ENCODE measurements at regions of chr17 and their contacts with region 1.

Region 1: GRCh38 chr17:81484195-81484979 is 28.2 kb downstream of the ACTG1 start:
- DNase-seq: peak; percentile 68
- H3K4me3 ChIP-seq: peak overlapping the region in 1 of 3 experiments; percentile 8
- H3K27ac ChIP-seq: no peak overlapping the region
- H3K4me1 ChIP-seq: peaks cover 18% of the 10 kb centered on the region
- H3K27me3 ChIP-seq: peaks cover 0 to 1% of the 10 kb centered on the region in 2 experiments
- CTCF ChIP-seq: peak; percentile 82 to 98
- POLR2A ChIP-seq: no peak

Region 2: DNA sequence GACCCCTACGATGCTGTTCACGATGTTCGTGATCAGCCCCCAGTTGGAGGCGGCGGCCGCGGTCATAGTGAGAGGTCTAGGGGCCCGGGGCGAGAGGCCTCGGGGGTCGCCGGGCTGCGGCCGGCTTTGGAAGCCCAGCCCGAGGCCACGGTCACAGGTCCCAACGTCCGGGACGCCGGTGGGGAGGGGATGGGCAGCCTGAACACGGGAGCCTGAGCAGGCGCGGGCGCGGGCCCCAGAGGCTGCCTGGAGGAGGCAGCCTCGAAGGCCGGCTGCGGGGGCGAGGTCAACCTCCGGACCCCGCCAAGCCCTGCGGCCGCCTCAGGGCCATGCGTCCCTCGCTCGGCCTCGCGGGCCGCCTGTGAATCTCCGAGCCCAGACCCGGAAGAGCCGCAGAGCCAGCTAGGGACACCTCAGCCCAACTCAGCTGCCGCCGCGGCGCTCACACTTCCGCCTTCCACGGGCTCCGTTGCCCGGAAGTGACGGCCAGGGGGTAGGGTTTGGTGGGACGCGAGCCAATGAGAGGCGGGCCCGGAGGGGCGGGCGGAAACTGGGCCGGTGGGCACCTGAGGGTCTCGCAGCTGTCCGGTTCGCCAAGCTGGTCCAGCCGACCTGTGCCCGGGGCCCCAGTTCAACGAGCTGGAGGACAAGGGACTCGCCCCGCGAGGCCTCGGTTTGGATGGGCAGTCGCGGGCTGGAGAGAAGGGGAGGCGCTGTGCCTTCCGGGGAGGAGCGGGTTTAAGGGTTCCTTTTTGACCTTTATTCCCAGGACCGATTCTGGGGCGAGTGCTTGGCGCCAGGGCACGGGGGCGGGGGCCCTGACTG is 189.3 kb before region 1 on chr17 and contains the start of gene SLC38A10:
- CTCF ChIA-PET with region 1: interaction called, 8 read pairs
- POLR2A ChIA-PET with region 1: no interaction called
- dilution Hi-C with region 1: no loop called
- intact Hi-C with region 1: loop called (anchors 1 kb)
- DNase-seq: peak; percentile 79
- H3K4me3 ChIP-seq: peak within 1 kb of the TSS; percentile 57 to 72 (median 63)
- H3K27ac ChIP-seq: peak within 1 kb of the TSS; percentile 86
- H3K4me1 ChIP-seq: peaks cover 14% of the 10 kb centered on the region
- H3K27me3 ChIP-seq: no peaks in the 10 kb centered on the region
- CTCF ChIP-seq: no peak
- POLR2A ChIP-seq: peak; percentile 91
- total RNA-seq, gene SLC38A10: 109 and 113 TPM in 2 replicates

Region 3: DNA sequence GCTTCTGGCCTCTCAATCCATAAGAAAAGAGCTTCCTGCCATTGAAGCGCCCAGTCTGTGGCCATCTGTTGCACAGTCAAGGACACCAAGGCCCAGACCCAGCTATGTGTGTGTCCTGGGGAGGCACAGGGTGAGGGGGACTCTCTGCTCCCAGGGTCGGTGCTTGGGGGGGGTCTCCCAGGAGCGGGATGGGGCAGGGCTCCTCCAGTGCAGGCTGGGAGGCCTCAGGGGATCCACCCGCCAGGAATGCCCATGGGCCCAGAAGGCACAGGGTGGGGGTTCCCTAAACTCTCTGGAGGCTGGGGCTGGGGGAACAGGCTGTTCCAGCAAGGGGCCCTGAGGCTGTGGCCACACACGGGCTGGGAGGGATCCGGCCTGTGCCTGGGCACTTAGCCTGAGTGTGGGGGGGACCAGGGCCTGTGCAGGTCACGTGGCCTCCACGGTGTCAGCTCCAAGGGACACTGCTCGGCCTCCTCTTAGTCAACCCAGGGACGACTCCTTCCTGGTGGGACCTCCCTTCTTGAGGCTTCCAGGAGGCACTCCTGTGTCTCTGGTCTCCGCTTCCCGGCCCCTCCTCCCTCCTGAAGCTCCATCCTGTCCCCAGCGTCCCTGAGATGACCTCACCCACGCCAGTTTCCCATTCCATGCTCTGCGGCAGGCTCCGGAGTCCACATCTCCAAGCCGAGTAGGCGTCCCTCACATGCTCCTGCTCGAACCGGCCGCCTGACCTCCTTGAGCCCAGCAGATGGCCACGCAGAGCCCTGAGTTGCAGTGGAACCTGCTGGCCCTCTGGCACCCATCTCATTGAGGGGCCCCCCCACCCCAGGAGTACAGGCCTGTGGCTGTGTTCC is 112.3 kb before region 1 on chr17:
- CTCF ChIA-PET with region 1: interaction called, 21 read pairs
- POLR2A ChIA-PET with region 1: no interaction called
- dilution Hi-C with region 1: no loop called
- intact Hi-C with region 1: no loop called
- DNase-seq: peak; percentile 31
- H3K4me3 ChIP-seq: no peak overlapping the region
- H3K27ac ChIP-seq: no peak overlapping the region
- H3K4me1 ChIP-seq: no peaks in the 10 kb centered on the region
- H3K27me3 ChIP-seq: peaks cover 0 to 5% of the 10 kb centered on the region in 2 experiments
- CTCF ChIP-seq: peak; percentile 31 to 71
- POLR2A ChIP-seq: no peak

Region 4: GRCh38 chr17:81401723-81402529 is 82.5 kb before region 1 on chr17:
- CTCF ChIA-PET with region 1: interaction called, 58 read pairs
- POLR2A ChIA-PET with region 1: interaction called, 3 read pairs
- dilution Hi-C with region 1: no loop called
- intact Hi-C with region 1: loop called (anchors 1 kb)
- DNase-seq: peak; percentile 41
- H3K4me3 ChIP-seq: no peak overlapping the region
- H3K27ac ChIP-seq: no peak overlapping the region
- H3K4me1 ChIP-seq: peaks cover 21% of the 10 kb centered on the region
- H3K27me3 ChIP-seq: no peaks in the 10 kb centered on the region
- CTCF ChIP-seq: peak; percentile 19 to 47
- POLR2A ChIP-seq: no peak

Region 5: GRCh38 chr17:81440876-81441244 is 43.5 kb before region 1 on chr17:
- CTCF ChIA-PET with region 1: interaction called, 26 read pairs
- POLR2A ChIA-PET with region 1: no interaction called
- dilution Hi-C with region 1: no loop called
- intact Hi-C with region 1: loop called (anchors 5 kb)
- DNase-seq: peak; percentile 19
- H3K4me3 ChIP-seq: no peak overlapping the region
- H3K27ac ChIP-seq: no peak overlapping the region
- H3K4me1 ChIP-seq: no peaks in the 10 kb centered on the region
- H3K27me3 ChIP-seq: no peaks in the 10 kb centered on the region
- CTCF ChIP-seq: peak; percentile 48 to 75
- POLR2A ChIP-seq: no peak

Region 6: GRCh38 chr17:81512560-81513371 is 28.4 kb after region 1 on chr17 and contains the start of gene ACTG1:
- CTCF ChIA-PET with region 1: interaction called, 11 read pairs
- POLR2A ChIA-PET with region 1: interaction called, 3 read pairs
- dilution Hi-C with region 1: no loop called
- intact Hi-C with region 1: loop called (anchors 2 kb)
- DNase-seq: peak; percentile 88
- H3K4me3 ChIP-seq: peak within 1 kb of the TSS; percentile 42 to 93 (median 78)
- H3K27ac ChIP-seq: peak within 1 kb of the TSS; percentile 60
- H3K4me1 ChIP-seq: peaks cover 36% of the 10 kb centered on the region
- H3K27me3 ChIP-seq: no peaks in the 10 kb centered on the region
- CTCF ChIP-seq: no peak
- POLR2A ChIP-seq: peak; percentile 99
- total RNA-seq, gene ACTG1: 6,127 and 6,180 TPM in 2 replicates

Region 7: GRCh38 chr17:81528384-81528635 is 43.9 kb after region 1 on chr17:
- CTCF ChIA-PET with region 1: no interaction called
- POLR2A ChIA-PET with region 1: no interaction called
- dilution Hi-C with region 1: no loop called
- intact Hi-C with region 1: no loop called
- DNase-seq: no peak
- H3K4me3 ChIP-seq: no peak overlapping the region
- H3K27ac ChIP-seq: no peak overlapping the region
- H3K4me1 ChIP-seq: no peaks in the 10 kb centered on the region
- H3K27me3 ChIP-seq: no peaks in the 10 kb centered on the region
- CTCF ChIP-seq: no peak
- POLR2A ChIP-seq: no peak

Region 8: DNA sequence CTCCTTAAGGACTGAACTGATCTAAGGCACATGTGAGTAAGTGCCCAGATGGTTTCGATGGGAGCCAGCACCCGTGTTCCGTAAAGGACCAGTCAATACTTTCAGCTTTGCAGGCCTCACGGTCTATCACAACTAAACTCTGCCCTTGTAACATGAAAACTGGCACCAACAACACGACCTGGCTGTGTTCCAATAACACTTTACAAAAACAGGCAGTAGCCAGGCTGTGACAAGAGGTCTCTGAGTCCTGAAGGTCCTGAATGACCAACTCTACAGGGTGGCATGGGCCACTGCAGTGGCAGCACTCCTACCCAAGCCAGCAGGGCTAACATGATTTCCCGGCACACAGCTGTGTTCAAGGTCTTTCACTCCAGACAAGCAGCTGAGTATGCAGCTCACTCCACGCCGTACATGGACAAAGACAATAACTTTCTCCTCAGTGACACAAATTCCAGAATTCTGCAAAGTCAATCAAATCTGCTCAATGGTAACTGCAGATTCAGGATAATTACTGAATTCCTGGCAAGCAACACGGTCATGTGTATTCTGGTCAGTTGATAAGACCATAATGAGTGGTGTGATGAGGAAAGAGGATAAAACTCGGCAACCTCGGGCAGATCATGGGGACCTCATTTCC is 137.2 kb after region 1 on chr17:
- CTCF ChIA-PET with region 1: no interaction called
- POLR2A ChIA-PET with region 1: no interaction called
- dilution Hi-C with region 1: no loop called
- intact Hi-C with region 1: no loop called
- DNase-seq: peak; percentile 12
- H3K4me3 ChIP-seq: no peak overlapping the region
- H3K27ac ChIP-seq: no peak overlapping the region
- H3K4me1 ChIP-seq: no peaks in the 10 kb centered on the region
- H3K27me3 ChIP-seq: no peaks in the 10 kb centered on the region
- CTCF ChIP-seq: no peak
- POLR2A ChIP-seq: no peak

Region 9: GRCh38 chr17:81844327-81844851 is 360.0 kb after region 1 on chr17:
- CTCF ChIA-PET with region 1: no interaction called
- POLR2A ChIA-PET with region 1: no interaction called
- dilution Hi-C with region 1: no loop called
- intact Hi-C with region 1: no loop called
- DNase-seq: no peak
- H3K4me3 ChIP-seq: no peak overlapping the region
- H3K27ac ChIP-seq: no peak overlapping the region
- H3K4me1 ChIP-seq: no peaks in the 10 kb centered on the region
- H3K27me3 ChIP-seq: no peaks in the 10 kb centered on the region
- CTCF ChIP-seq: no peak
- POLR2A ChIP-seq: no peak

Measured in endothelial cell of umbilical vein (primary cell).